Activated naive CD4-positive, alpha-beta T cell treated with anti-CD3 and anti-CD28 coated beads for 36 hours (primary cell): ENCODE measurements at regions of chr12 and their contacts with region 1.

Region 1: GRCh38 chr12:103877934-103878510 is 37.0 kb upstream of the NT5DC3 start:
- DNase-seq: peak; percentile 79
- H3K4me3 Mint-ChIP-seq: no peak overlapping the region
- H3K27ac Mint-ChIP-seq: no peak overlapping the region
- H3K4me1 Mint-ChIP-seq: peaks cover 24% of the 10 kb centered on the region
- H3K27me3 Mint-ChIP-seq: no peaks in the 10 kb centered on the region

Region 2: DNA sequence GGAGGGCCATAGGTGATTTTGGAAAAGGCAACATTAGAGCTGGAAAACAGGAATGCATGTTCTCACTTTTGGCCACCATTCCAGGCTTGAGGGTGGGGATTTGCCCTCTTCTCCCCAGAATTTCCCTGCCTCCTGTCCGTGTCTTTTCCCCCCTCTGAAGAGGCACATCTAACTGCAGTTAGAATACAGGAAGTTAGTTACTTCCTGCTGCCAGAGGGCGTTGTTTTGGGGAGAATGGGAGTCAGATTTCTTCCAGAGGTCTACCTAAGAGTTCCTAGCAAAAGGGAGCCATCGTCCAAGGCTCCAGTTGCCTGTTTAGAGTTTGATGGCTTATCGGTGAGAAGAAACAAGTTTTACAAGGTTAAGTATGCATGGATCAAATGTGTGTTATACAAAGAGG is 1284.9 kb before region 1 on chr12:
- CTCF ChIA-PET with region 1: no interaction called
- intact Hi-C with region 1: no loop called
- DNase-seq: no peak
- H3K4me3 Mint-ChIP-seq: no peak overlapping the region
- H3K27ac Mint-ChIP-seq: no peak overlapping the region
- H3K4me1 Mint-ChIP-seq: no peaks in the 10 kb centered on the region
- H3K27me3 Mint-ChIP-seq: no peaks in the 10 kb centered on the region

Region 3: GRCh38 chr12:103166945-103167344 is 711.1 kb before region 1 on chr12:
- CTCF ChIA-PET with region 1: no interaction called
- intact Hi-C with region 1: no loop called
- DNase-seq: no peak
- H3K4me3 Mint-ChIP-seq: no peak overlapping the region
- H3K27ac Mint-ChIP-seq: no peak overlapping the region
- H3K4me1 Mint-ChIP-seq: no peaks in the 10 kb centered on the region
- H3K27me3 Mint-ChIP-seq: no peaks in the 10 kb centered on the region

Region 4: GRCh38 chr12:103840876-103841689 is 36.9 kb before region 1 on chr12 and contains the start of gene NT5DC3:
- CTCF ChIA-PET with region 1: no interaction called
- intact Hi-C with region 1: loop called (anchors 2 kb)
- DNase-seq: peak; percentile 82
- H3K4me3 Mint-ChIP-seq: peak within 1 kb of the TSS; percentile 81
- H3K27ac Mint-ChIP-seq: no peak within 1 kb of the TSS
- H3K4me1 Mint-ChIP-seq: peaks cover 21% of the 10 kb centered on the region
- H3K27me3 Mint-ChIP-seq: no peaks in the 10 kb centered on the region
- total RNA-seq, gene NT5DC3: 6.0 to 6.4 TPM

Region 5: DNA sequence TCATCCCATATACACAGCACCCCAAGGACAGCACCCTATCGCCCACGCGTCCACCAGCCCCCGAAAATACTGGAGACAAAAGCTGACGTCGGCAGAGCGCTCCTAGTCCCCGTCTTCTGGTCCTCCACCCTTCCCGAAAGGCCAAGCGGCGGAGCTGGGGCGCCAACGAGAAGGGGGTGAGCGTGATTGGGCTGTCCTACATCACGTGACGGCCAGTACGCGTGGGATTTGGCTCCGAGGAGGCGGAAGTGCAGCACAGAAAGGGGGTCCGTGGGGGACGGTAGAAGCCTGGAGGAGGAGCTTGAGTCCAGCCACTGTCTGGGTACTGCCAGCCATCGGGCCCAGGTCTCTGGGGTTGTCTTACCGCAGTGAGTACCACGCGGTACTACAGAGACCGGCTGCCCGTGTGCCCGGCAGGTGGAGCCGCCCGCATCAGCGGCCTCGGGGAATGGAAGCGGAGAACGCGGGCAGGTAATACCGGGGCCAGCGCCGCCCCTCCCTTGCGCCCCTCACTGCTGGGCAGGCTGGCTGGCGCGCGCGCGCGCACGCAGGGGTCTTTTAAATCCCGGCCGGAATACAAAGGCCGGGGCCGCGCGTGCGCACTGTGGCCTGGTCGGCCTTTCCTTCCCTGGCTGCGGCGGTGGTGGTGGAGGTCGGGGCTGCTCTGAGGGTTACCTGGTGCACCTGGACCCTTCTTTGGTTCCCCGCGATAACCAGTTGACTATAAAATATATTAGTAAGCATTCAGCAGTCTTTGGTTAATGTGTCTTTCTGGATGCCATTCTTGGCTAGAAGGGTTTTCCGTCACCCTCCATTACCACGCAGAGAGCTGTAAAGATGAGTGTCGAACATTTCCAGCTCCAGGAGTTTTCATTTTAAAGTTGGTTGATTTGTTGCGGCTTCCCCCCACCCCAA is 87.8 kb after region 1 on chr12 and contains the start of gene TDG:
- CTCF ChIA-PET with region 1: interaction called, 4 read pairs
- intact Hi-C with region 1: loop called (anchors 1 kb)
- DNase-seq: peak; percentile 99
- H3K4me3 Mint-ChIP-seq: peak within 1 kb of the TSS; percentile 96
- H3K27ac Mint-ChIP-seq: peak within 1 kb of the TSS; percentile 97
- H3K4me1 Mint-ChIP-seq: peaks cover 48% of the 10 kb centered on the region
- H3K27me3 Mint-ChIP-seq: no peaks in the 10 kb centered on the region
- total RNA-seq, gene TDG: 18.0 to 19.3 TPM

Region 6: GRCh38 chr12:104064031-104064822 is 186.2 kb after region 1 on chr12 and contains the start of gene HCFC2:
- CTCF ChIA-PET with region 1: no interaction called
- intact Hi-C with region 1: loop called (anchors 2 kb)
- DNase-seq: peak; percentile 91
- H3K4me3 Mint-ChIP-seq: peak within 1 kb of the TSS; percentile 93
- H3K27ac Mint-ChIP-seq: peak within 1 kb of the TSS; percentile 84
- H3K4me1 Mint-ChIP-seq: peaks cover 16% of the 10 kb centered on the region
- H3K27me3 Mint-ChIP-seq: peaks cover 16% of the 10 kb centered on the region
- total RNA-seq, gene HCFC2: 7.4 to 8.3 TPM

Region 7: GRCh38 chr12:104201238-104202001 is 323.4 kb after region 1 on chr12:
- CTCF ChIA-PET with region 1: no interaction called
- intact Hi-C with region 1: loop called (anchors 1 kb)
- DNase-seq: peak; percentile 64
- H3K4me3 Mint-ChIP-seq: no peak overlapping the region
- H3K27ac Mint-ChIP-seq: no peak overlapping the region
- H3K4me1 Mint-ChIP-seq: peaks cover 2% of the 10 kb centered on the region
- H3K27me3 Mint-ChIP-seq: peaks cover 7% of the 10 kb centered on the region